RWPE1 (cell line): ENCODE measurements at regions of chr17 and their contacts with region 1.

Region 1: DNA sequence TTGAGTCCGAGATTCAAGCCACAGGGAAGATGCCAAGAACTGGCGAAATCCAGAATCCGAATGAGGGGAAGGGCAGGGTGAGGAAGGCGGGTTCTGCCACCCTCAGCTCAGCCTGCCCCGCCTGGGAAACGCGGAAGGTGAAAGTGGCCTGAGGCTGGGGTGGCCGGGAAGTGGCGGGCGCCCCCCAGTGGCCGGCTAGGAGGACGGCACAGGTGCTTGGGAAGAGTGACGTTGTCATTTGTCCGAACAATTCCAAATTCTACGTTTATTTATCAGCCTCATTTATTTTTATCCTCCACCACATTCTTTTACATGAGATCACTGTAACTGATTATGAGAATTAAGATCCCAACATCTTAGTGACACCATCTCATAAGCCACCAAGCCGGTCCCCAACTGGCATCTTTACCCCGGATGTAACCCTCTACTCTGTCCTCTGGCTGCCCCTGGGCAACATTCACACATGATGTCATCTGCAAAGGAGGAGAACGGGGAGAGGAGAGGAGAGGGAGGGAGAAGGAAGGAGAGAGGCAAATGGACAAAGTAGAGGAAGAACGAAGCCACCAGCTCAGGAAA is 21.3 kb downstream of the SRCIN1 start:
- DNase-seq: peak; percentile 84
- H3K27ac ChIP-seq: no peak overlapping the region
- CTCF ChIP-seq: peak; percentile 95

Region 2: DNA sequence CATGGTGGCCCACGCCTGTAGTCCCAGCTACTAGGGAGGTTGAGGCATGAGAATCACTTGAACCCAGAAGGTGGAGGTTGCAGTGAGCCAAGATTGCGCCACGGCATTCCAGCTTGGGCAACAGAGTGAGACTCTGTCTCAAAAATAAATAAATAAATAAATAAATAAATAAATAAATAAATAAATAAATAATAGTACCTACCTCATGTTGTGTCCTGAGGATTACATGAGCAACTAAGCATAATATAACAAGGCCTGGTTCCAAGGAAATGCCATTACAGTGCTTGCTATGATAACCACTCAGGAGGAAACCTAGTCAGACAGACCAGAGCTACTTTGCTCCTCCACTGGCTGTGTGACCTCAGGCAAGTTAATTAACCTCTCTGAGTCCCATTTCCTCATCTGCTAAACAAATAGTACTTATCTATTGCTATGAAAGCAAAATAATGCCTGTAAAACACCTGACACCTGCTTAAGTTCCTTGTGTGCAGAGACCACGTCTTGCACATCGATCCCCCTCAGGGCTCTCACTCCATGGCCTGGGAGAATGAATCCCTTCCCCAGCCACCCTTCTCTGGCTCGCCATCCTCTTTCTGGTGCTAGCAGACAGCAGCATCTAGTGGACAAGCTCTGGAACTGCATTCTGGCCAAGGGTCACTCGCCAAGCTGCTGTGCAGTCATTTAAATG is 82.8 kb after region 1 on chr17:
- CTCF ChIA-PET with region 1: interaction called, 10 read pairs
- POLR2A ChIA-PET with region 1: no interaction called
- DNase-seq: peak; percentile 77
- H3K27ac ChIP-seq: no peak overlapping the region
- CTCF ChIP-seq: peak; percentile 99